ENCODE measurements at regions of chr6 and their contacts with region 1.

Region 1: DNA sequence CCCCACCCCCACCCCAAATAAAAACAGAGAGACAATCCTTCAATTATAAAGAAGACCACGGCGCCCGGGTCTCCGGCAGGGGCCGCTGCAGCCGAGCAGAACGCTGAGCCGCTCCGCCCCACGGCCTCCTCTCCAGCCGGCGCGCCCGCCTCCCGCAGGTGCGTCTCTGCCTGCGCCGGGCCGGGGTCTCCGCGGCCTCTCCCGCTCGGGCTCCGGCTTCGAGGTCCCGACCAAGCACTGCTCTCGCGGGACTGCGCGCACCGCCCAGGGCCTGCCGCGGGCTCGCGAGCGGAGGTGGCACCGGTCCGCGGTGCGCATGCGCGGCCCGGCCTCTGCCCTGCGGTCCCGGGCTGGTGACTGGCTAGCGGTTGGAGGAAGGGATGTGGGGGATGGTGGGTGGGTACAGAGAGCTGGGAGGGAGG is 241 bp upstream of the SIRT5 start:
- DNase-seq: peak; percentile 78 to 98 (median 85)

Region 2: GRCh38 chr6:13711733-13712598 is 137.8 kb after region 1 on chr6 and contains the start of gene RANBP9:
- intact Hi-C with region 1: loop called (anchors 5 kb)
- DNase-seq: peak; percentile 70 to 97 (median 84)

Measured in posterior cingulate gyrus (tissue), 11 donors.